MCF 10A (cell line): ENCODE measurements at regions of chr11 and their contacts with region 1.

Region 1: DNA sequence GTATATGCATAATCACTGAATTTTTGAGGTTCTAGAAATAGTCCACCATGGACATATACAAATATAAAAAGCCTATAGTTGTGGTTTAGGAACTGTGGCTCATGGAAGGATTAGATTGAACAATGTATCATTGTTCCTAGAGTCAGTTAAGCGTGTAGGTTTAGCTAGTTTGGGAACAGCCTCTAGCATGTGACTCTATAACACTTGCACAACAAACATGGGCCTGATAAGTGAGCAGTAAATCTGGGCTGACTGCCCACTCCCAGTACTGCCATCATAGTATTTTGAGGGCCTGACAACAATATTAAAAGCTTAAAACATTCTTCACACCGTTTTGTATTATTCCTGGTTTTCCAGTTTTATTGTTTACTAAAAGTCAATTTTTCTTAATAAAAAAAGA is 47.0 kb downstream of the YAP1 start:
- DNase-seq: peak; percentile 87
- H3K4me3 Mint-ChIP-seq: no peak overlapping the region
- H3K27ac Mint-ChIP-seq: peak overlapping the region; percentile 39
- H3K4me1 Mint-ChIP-seq: peaks cover 48% of the 10 kb centered on the region
- H3K27me3 Mint-ChIP-seq: no peaks in the 10 kb centered on the region
- CTCF ChIP-seq: no peak

Region 2: GRCh38 chr11:102115557-102115956 is 41.7 kb before region 1 on chr11:
- CTCF ChIA-PET with region 1: interaction called, 4 read pairs
- POLR2A ChIA-PET with region 1: interaction called, 13 read pairs
- intact Hi-C with region 1: no loop called
- DNase-seq: peak; percentile 54
- H3K4me3 Mint-ChIP-seq: no peak overlapping the region
- H3K27ac Mint-ChIP-seq: no peak overlapping the region
- H3K4me1 Mint-ChIP-seq: peaks cover 25% of the 10 kb centered on the region
- H3K27me3 Mint-ChIP-seq: no peaks in the 10 kb centered on the region
- CTCF ChIP-seq: no peak

Region 3: GRCh38 chr11:102139081-102139498 is 18.1 kb before region 1 on chr11:
- CTCF ChIA-PET with region 1: interaction called, 3 read pairs
- POLR2A ChIA-PET with region 1: interaction called, 27 read pairs
- intact Hi-C with region 1: no loop called
- DNase-seq: peak; percentile 72
- H3K4me3 Mint-ChIP-seq: peak overlapping the region; percentile 55
- H3K27ac Mint-ChIP-seq: peak overlapping the region; percentile 91
- H3K4me1 Mint-ChIP-seq: peaks cover 30% of the 10 kb centered on the region
- H3K27me3 Mint-ChIP-seq: no peaks in the 10 kb centered on the region
- CTCF ChIP-seq: no peak

Region 4: GRCh38 chr11:102144357-102145342 is 12.6 kb before region 1 on chr11:
- CTCF ChIA-PET with region 1: interaction called, 4 read pairs
- POLR2A ChIA-PET with region 1: interaction called, 27 read pairs
- intact Hi-C with region 1: no loop called
- DNase-seq: peak; percentile 69
- H3K4me3 Mint-ChIP-seq: peak overlapping the region; percentile 3
- H3K27ac Mint-ChIP-seq: peak overlapping the region; percentile 37
- H3K4me1 Mint-ChIP-seq: peaks cover 47% of the 10 kb centered on the region
- H3K27me3 Mint-ChIP-seq: no peaks in the 10 kb centered on the region
- CTCF ChIP-seq: no peak

Region 5: GRCh38 chr11:102171101-102171500 is 13.9 kb after region 1 on chr11:
- CTCF ChIA-PET with region 1: interaction called, 3 read pairs
- POLR2A ChIA-PET with region 1: interaction called, 73 read pairs
- intact Hi-C with region 1: no loop called
- DNase-seq: peak; percentile 64
- H3K4me3 Mint-ChIP-seq: no peak overlapping the region
- H3K27ac Mint-ChIP-seq: peak overlapping the region; percentile 76
- H3K4me1 Mint-ChIP-seq: peaks cover 34% of the 10 kb centered on the region
- H3K27me3 Mint-ChIP-seq: no peaks in the 10 kb centered on the region
- CTCF ChIP-seq: no peak

Region 6: GRCh38 chr11:102177974-102178631 is 20.9 kb after region 1 on chr11:
- CTCF ChIA-PET with region 1: interaction called, 3 read pairs
- POLR2A ChIA-PET with region 1: interaction called, 73 read pairs
- intact Hi-C with region 1: no loop called
- DNase-seq: peak; percentile 92
- H3K4me3 Mint-ChIP-seq: peak overlapping the region; percentile 49
- H3K27ac Mint-ChIP-seq: peak overlapping the region; percentile 17
- H3K4me1 Mint-ChIP-seq: peaks cover 38% of the 10 kb centered on the region
- H3K27me3 Mint-ChIP-seq: no peaks in the 10 kb centered on the region
- CTCF ChIP-seq: no peak

Region 7: DNA sequence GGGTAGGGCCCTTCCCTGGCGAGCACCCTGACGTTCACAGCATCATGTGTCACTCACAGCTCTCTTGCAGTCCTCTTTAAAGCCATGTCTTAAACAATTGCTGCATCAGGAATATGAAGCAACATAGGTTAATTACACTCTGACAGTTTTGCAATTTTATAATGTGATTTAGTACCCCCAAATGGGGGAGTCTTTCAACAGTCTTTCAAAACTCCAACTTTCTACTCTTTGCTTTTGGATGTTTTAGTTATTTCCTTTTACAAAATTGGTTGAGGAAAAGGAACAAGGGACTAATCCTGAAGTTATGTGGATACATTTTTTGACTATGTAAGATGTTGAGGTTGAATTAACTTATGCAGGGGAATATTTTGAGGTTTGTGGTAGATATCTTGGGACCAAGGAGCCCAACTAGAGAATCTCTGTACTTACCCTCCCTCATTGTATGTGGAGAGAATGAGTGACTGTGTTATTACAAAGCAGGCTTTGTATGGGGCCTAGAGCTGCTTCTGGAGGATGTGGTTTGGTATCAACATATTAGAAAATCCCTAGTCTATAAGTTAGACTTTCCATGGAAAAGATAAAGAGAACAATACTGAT is 567.8 kb after region 1 on chr11 and contains the start of gene MMP8:
- CTCF ChIA-PET with region 1: no interaction called
- POLR2A ChIA-PET with region 1: no interaction called
- intact Hi-C with region 1: no loop called
- DNase-seq: no peak
- H3K4me3 Mint-ChIP-seq: no peak within 1 kb of the TSS
- H3K27ac Mint-ChIP-seq: no peak within 1 kb of the TSS
- H3K4me1 Mint-ChIP-seq: peaks cover 16% of the 10 kb centered on the region
- H3K27me3 Mint-ChIP-seq: no peaks in the 10 kb centered on the region
- CTCF ChIP-seq: no peak
- total RNA-seq, gene MMP8: 0.12 TPM in 1 of 2 replicates, not detected in the other